Activated naive CD4-positive, alpha-beta T cell treated with anti-CD3 and anti-CD28 coated beads for 36 hours (primary cell): ENCODE measurements at regions of chr12 and their contacts with region 1.

Region 1: GRCh38 chr12:104671407-104672098 is 214.8 kb downstream of the CHST11 start:
- DNase-seq: peak; percentile 98
- H3K4me3 Mint-ChIP-seq: peak overlapping the region; percentile 42
- H3K27ac Mint-ChIP-seq: peak overlapping the region; percentile 97
- H3K4me1 Mint-ChIP-seq: peaks cover 46% of the 10 kb centered on the region
- H3K27me3 Mint-ChIP-seq: no peaks in the 10 kb centered on the region

Region 2: DNA sequence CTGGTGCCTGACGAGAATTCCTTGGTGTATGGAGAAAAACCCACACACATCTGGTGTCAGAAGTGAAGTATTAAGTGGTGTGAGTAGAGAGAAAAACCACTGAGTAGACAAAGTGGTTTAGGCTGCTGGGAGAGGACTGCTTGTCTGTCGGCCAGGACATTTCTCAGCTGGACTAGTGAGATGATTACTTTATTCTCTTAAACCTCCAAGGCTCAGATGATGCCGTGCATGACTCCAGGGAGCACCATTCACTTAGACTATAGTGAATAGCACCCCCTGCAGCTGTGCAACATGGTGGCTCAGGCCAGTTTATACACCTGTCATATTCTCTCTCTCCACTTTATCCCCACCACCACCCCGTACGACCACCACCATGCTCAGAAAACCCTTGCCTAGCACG is 505.1 kb before region 1 on chr12:
- CTCF ChIA-PET with region 1: no interaction called
- intact Hi-C with region 1: no loop called
- DNase-seq: no peak
- H3K4me3 Mint-ChIP-seq: no peak overlapping the region
- H3K27ac Mint-ChIP-seq: no peak overlapping the region
- H3K4me1 Mint-ChIP-seq: peaks cover 6% of the 10 kb centered on the region
- H3K27me3 Mint-ChIP-seq: no peaks in the 10 kb centered on the region

Region 3: GRCh38 chr12:104381731-104382480 is 289.6 kb before region 1 on chr12:
- CTCF ChIA-PET with region 1: interaction called, 4 read pairs
- intact Hi-C with region 1: loop called (anchors 1 kb)
- DNase-seq: peak; percentile 91
- H3K4me3 Mint-ChIP-seq: no peak overlapping the region
- H3K27ac Mint-ChIP-seq: no peak overlapping the region
- H3K4me1 Mint-ChIP-seq: peaks cover 10% of the 10 kb centered on the region
- H3K27me3 Mint-ChIP-seq: no peaks in the 10 kb centered on the region

Region 4: DNA sequence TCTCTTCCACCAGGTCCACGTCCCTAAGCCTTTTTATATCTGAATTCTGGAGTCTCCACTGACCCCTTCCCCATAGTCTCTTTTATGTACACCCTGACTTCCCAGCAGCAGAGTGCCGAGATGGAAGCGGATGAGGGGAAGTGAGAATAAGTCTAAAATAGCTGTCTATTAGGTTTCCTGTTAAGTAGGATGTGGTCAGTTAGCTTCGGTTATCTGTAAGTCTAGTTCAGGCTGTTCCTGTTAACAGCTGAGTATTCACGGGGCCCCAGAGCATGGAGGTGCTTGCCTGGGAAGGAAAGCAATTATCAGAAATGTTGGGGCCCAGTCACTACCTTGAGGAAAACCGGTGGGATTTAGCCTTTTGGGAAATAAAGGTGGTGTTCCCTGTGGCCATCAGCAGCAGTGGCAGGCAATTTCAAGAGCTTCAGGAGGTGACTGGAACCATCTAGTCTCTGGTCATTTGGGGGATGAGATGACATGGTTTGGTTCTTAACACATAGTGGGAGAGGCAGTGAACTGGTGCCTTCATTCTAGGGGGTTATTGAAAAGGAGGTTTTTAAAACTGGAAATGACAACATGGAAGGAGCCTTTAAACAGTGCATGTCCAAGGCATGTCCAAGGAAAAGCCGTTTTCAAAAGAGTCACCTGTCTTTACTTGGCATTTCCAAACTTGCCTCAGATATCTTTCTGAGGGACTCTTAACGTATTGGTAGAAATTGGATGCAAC is 193.0 kb before region 1 on chr12:
- CTCF ChIA-PET with region 1: no interaction called
- intact Hi-C with region 1: loop called (anchors 1 kb)
- DNase-seq: peak; percentile 63
- H3K4me3 Mint-ChIP-seq: peak overlapping the region; percentile 83
- H3K27ac Mint-ChIP-seq: peak overlapping the region; percentile 96
- H3K4me1 Mint-ChIP-seq: peaks cover 68% of the 10 kb centered on the region
- H3K27me3 Mint-ChIP-seq: no peaks in the 10 kb centered on the region

Region 5: DNA sequence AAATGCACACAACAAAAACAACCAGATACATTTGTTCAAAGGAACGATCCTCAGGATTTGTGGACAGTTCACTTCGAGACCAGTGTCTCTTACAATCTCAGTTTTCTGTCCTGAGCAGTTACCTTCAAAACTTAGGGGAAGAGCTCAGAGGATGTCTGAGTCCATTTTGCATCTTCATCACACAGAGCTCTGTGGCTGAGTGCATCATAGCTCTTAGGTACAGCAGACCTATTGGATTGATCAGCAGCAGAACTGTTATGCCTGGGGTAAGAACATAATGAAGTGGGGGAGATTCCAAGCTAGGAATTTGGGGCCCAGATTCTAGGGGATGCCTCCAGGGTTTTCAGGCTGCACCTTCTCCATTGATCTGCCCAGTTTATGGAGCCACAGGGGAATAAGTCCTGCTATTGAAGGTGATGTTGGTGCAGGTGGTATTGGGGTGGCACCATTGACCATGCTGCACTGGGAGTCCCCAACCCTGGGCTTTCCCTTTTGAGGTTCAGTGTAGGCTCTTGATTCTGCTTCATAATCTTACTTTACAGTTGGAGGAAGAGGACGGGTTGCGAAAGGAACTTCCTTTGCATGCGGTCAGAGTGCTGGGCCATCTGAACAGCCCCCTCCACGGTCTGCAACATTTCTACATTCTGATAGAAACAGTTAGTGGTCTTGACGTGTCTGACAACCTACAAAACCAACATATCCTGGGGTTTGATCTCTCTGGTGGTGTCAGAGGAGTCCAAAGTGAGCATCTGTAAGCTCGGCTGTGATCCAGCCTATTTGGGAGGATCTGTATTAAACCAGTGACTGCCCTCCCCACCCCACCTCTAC is 102.0 kb before region 1 on chr12:
- CTCF ChIA-PET with region 1: no interaction called
- intact Hi-C with region 1: loop called (anchors 1 kb)
- DNase-seq: peak; percentile 64
- H3K4me3 Mint-ChIP-seq: no peak overlapping the region
- H3K27ac Mint-ChIP-seq: peak overlapping the region; percentile 17
- H3K4me1 Mint-ChIP-seq: peaks cover 49% of the 10 kb centered on the region
- H3K27me3 Mint-ChIP-seq: no peaks in the 10 kb centered on the region

Region 6: GRCh38 chr12:104598342-104599271 is 72.9 kb before region 1 on chr12:
- CTCF ChIA-PET with region 1: no interaction called
- intact Hi-C with region 1: no loop called
- DNase-seq: no peak
- H3K4me3 Mint-ChIP-seq: no peak overlapping the region
- H3K27ac Mint-ChIP-seq: no peak overlapping the region
- H3K4me1 Mint-ChIP-seq: peaks cover 26% of the 10 kb centered on the region
- H3K27me3 Mint-ChIP-seq: no peaks in the 10 kb centered on the region

Region 7: DNA sequence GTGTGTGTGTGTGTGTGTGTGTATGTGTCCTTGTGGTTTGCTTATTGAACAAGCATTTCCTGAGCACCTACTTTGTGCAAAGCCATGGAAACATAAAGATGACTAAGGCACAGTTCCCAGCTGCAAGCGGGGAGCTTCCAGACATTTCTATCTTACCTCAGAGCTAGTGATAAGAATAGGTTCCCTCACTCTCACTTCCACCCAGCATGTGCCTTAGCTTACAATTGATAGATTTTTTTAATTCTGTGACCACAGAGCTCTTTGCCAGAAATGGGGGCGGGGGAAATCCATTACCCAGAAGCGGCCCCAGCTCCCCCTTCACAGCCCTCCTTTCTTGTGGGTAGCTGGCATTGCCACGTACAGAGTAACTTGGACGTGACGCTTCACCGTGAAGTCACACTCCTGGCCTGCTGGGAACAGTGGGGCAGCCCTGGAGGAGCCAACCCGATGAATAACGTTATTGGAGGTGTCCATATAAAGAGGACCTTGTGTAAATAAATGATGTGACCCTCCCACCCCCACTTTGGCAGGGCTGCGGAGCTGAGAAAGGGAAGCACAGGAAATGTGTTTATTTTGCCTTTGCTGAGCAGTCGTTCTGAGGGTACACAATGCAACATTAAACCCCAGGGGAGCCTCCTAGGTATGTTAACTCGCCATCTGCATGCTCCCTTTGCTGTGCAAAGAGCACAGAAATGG is 24.0 kb after region 1 on chr12:
- CTCF ChIA-PET with region 1: interaction called, 3 read pairs
- intact Hi-C with region 1: loop called (anchors 1 kb)
- DNase-seq: peak; percentile 97
- H3K4me3 Mint-ChIP-seq: peak overlapping the region; percentile 37
- H3K27ac Mint-ChIP-seq: peak overlapping the region; percentile 93
- H3K4me1 Mint-ChIP-seq: peaks cover 61% of the 10 kb centered on the region
- H3K27me3 Mint-ChIP-seq: no peaks in the 10 kb centered on the region

Region 8: GRCh38 chr12:104740668-104741067 is 69.1 kb after region 1 on chr12:
- CTCF ChIA-PET with region 1: no interaction called
- intact Hi-C with region 1: loop called (anchors 2 kb)
- DNase-seq: peak; percentile 49
- H3K4me3 Mint-ChIP-seq: peak overlapping the region; percentile 53
- H3K27ac Mint-ChIP-seq: peak overlapping the region; percentile 60
- H3K4me1 Mint-ChIP-seq: peaks cover 52% of the 10 kb centered on the region
- H3K27me3 Mint-ChIP-seq: no peaks in the 10 kb centered on the region